Activated CD4-positive, alpha-beta T cell treated with anti-CD3 and anti-CD28 coated beads, Interleukin-2, amount 10 ng/mL, durations not matched to agents 24 days and 14 days (primary cell): ENCODE measurements at regions of chr7 and their contacts with region 1.

Region 1: GRCh38 chr7:2863461-2864066 is 19.5 kb upstream of the GNA12 start:
- DNase-seq: peak; percentile 92
- H3K4me3 Mint-ChIP-seq: peak overlapping the region; percentile 73
- H3K27ac Mint-ChIP-seq: peak overlapping the region; percentile 86
- H3K4me1 Mint-ChIP-seq: peaks cover 29% of the 10 kb centered on the region
- H3K27me3 Mint-ChIP-seq: no peaks in the 10 kb centered on the region

Region 2: GRCh38 chr7:2720582-2721491 is 142.7 kb before region 1 on chr7:
- intact Hi-C with region 1: loop called (anchors 2 kb)
- DNase-seq: peak; percentile 86
- H3K4me3 Mint-ChIP-seq: peak overlapping the region; percentile 40
- H3K27ac Mint-ChIP-seq: peak overlapping the region; percentile 83
- H3K4me1 Mint-ChIP-seq: peaks cover 42% of the 10 kb centered on the region
- H3K27me3 Mint-ChIP-seq: no peaks in the 10 kb centered on the region

Region 3: DNA sequence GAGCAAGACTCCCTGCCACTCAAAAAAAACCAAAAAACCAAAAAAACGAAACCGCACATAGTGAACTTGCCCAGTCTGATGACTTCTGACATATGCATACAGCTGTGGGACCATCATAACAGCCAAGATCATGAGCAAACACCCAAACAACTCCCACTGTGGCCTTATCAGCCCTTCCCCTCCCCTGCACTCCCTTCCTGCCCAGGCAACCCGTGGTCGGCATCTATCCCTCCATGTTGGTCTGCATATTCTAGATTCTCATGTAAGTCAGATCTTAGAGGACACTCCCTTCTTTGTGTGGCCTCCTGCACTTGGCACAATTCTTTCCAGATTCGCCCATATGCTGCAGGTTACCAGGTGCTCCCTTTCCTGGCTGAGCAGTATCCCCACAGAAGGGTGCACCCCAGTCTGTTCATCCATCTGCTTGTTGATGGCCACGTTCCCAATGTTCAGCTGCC is 92.3 kb before region 1 on chr7:
- intact Hi-C with region 1: loop called (anchors 2 kb)
- DNase-seq: no peak
- H3K4me3 Mint-ChIP-seq: no peak overlapping the region
- H3K27ac Mint-ChIP-seq: peak overlapping the region; percentile 86
- H3K4me1 Mint-ChIP-seq: peaks cover 36% of the 10 kb centered on the region
- H3K27me3 Mint-ChIP-seq: no peaks in the 10 kb centered on the region

Region 4: DNA sequence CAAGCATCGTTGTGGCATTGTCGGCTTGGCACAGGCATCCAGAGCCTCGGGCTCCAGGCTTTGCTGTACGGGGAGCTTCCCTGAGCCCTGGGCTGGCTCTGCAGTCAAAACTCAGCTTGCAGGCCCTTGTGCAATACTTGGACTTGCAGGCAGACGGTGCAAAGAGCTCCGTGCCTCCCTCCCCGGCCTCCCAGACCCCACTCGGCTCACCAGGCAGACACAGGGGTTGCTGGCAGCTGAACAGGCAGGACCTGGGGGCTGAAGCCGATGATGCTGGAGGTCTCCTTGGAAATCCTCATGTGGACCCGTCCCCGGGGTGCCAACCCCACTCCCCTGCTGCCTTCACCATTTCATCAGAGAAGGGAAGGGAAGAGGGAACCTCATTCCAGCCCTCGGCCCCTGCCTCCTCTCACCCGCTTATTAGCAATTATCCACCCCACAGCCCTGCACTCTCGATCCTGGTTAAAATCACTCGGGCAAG is 40.2 kb after region 1 on chr7:
- intact Hi-C with region 1: loop called (anchors 5 kb)
- DNase-seq: peak; percentile 62
- H3K4me3 Mint-ChIP-seq: no peak overlapping the region
- H3K27ac Mint-ChIP-seq: peak overlapping the region; percentile 34
- H3K4me1 Mint-ChIP-seq: peaks cover 23% of the 10 kb centered on the region
- H3K27me3 Mint-ChIP-seq: no peaks in the 10 kb centered on the region

Region 5: GRCh38 chr7:3200504-3200903 is 336.9 kb after region 1 on chr7:
- intact Hi-C with region 1: loop called (anchors 1 kb)
- DNase-seq: peak; percentile 78
- H3K4me3 Mint-ChIP-seq: no peak overlapping the region
- H3K27ac Mint-ChIP-seq: no peak overlapping the region
- H3K4me1 Mint-ChIP-seq: no peaks in the 10 kb centered on the region
- H3K27me3 Mint-ChIP-seq: peaks cover 3% of the 10 kb centered on the region

Region 6: DNA sequence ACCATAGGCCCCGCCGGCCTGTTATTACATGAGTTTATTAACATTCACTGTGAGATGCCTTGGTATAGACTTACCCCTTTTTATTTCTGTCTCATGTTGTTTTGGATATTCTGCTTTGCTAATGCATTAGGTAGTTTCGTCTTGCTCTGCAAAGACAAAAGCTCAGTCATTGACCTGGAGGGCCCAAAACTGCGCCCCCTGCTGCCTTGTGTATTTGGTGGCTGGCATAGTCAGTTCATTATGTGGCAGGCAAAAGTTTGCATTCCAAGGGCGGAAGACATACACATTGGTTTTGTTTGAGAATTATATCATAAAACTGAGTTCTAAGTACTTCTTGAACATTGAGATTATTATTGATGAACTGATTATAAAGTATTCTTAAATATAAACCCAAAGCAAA is 810.0 kb after region 1 on chr7:
- intact Hi-C with region 1: loop called (anchors 10 kb)
- DNase-seq: peak; percentile 80
- H3K4me3 Mint-ChIP-seq: no peak overlapping the region
- H3K27ac Mint-ChIP-seq: no peak overlapping the region
- H3K4me1 Mint-ChIP-seq: no peaks in the 10 kb centered on the region
- H3K27me3 Mint-ChIP-seq: no peaks in the 10 kb centered on the region